Right cardiac atrium (tissue), 5 donors: ENCODE measurements at regions of chr9 and their contacts with region 1.

Region 1: GRCh38 chr9:36328798-36329411 is 70.7 kb upstream of the GNE start:
- DNase-seq: no peak
- ATAC-seq: peak; percentile 55 to 61
- H3K4me3 ChIP-seq: no peak overlapping the region
- H3K27ac ChIP-seq: no peak overlapping the region
- H3K4me1 ChIP-seq: peaks cover 2% of the 10 kb centered on the region
- H3K27me3 ChIP-seq: no peaks in the 10 kb centered on the region

Region 2: DNA sequence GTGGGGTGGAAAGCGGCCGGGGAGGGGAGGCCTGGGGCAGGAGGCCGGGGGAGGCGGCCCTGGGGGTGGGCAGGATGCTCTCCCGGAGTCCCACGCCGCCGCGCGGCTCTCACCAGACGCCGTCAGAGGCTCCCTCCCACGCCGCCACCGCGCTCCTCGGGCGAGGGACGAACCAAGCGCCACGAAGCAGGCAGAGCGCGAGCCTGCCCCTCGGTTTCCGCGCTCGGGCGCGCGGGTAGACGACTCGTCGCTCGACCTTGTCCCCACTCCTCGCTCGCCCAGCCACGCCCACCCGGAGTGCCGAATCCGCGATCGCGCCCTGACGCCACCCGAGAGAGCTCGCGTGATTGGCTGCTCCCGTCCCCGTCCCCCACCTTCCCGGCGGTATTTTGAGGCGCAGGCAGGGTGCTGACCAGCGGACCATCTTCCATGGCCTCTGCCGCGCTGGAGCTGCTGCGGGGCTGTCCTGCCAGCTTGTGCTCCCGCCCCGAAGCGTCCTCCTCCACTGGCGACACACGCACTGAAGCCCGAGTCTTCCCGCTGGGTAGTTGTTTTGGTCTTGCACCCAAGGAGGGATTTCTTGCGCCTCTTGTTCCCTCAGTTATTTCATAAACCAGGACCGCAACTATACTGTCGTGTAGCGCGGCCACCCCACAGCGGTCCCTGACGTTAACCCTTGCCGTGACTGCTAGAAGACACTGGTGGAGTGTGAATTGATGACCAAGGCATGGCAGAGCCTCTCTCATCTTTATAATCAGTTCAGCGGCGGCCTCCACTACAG is 70.5 kb before region 1 on chr9 and contains the start of gene GNE:
- intact Hi-C with region 1: loop called in 2 of 4 experiments (anchors 10 kb)
- DNase-seq: peak; percentile 99 to 100 (median 99)
- ATAC-seq: peak; percentile 99
- H3K4me3 ChIP-seq: peak within 1 kb of the TSS; percentile 82
- H3K27ac ChIP-seq: peak within 1 kb of the TSS; percentile 87
- H3K4me1 ChIP-seq: no peaks in the 10 kb centered on the region
- H3K27me3 ChIP-seq: no peaks in the 10 kb centered on the region
- total RNA-seq, gene GNE: 12.1 to 16.7 (median 14.8) TPM